Transverse colon (tissue), 4 donors: ENCODE measurements at regions of chr1 and their contacts with region 1.

Region 1: DNA sequence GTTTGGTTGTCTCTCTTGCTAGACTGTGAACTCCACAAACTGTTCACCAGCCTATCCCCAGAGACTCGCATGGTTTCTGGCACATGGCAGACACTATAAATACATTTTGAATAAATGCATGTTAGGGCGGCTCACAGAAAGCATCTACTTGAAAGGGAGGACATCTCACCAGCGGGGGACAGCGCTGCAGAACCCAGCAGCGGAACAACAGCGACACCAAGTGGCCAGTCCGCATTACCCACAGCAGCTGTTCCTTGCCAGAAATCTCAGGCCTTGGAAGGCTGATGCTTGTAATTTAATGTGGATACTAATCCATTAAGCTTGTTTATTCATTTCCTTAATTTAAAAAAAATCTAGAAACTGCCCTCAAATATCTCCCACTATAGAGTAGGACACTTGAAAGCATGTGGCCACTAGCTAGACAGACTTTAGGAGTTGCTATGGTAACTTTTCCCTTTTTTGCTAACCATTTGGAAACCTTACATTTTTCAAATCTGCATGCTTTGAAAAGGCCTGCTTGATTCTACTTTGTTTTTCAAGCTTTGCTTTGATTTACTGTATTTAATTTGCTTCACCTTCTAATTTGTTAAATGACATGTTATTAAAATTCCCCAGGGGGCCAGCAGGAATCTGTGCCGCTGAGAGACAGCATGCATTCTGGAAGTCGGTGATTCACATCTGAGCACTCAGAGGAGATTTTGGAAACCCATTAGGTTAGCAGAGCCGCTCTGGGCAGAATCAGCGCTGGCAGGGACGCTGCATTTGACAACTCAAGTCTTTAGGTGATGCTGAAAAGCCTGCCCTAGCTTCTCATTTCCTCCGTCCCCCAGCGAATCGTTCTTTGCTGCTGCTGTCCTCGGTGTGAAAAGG is 63.5 kb upstream of the SSX2IP start:
- DNase-seq: peak; percentile 76
- H3K4me3 ChIP-seq: no peak overlapping the region
- H3K27ac ChIP-seq: no peak overlapping the region
- H3K4me1 ChIP-seq: no peaks in the 10 kb centered on the region
- H3K27me3 ChIP-seq: no peaks in the 10 kb centered on the region
- CTCF ChIP-seq: peak; percentile 91 to 96 (median 95)
- EP300 ChIP-seq: no peak
- POLR2A ChIP-seq: no peak

Region 2: GRCh38 chr1:83905315-83905907 is 848.3 kb before region 1 on chr1:
- in situ Hi-C with region 1: loop called in 3 of 4 experiments (anchors 25 kb)
- intact Hi-C with region 1: no loop called
- DNase-seq: no peak
- H3K4me3 ChIP-seq: no peak overlapping the region
- H3K27ac ChIP-seq: no peak overlapping the region
- H3K4me1 ChIP-seq: peaks cover 0 to 15% (median 0%) of the 10 kb centered on the region in 4 donors
- H3K27me3 ChIP-seq: no peaks in the 10 kb centered on the region
- CTCF ChIP-seq: peak; percentile 45 to 75 (median 64)
- EP300 ChIP-seq: no peak
- POLR2A ChIP-seq: no peak

Region 3: GRCh38 chr1:84143796-84144565 is 609.8 kb before region 1 on chr1 and contains the start of gene PRKACB:
- in situ Hi-C with region 1: loop called (anchors 25 kb)
- intact Hi-C with region 1: no loop called
- DNase-seq: no peak
- H3K4me3 ChIP-seq: peak within 1 kb of the TSS in 3 of 4 donors; percentile 20 to 45 (median 30)
- H3K27ac ChIP-seq: peak within 1 kb of the TSS; percentile 71 to 85 (median 80)
- H3K4me1 ChIP-seq: peaks cover 0 to 41% (median 4%) of the 10 kb centered on the region in 4 donors
- H3K27me3 ChIP-seq: no peaks in the 10 kb centered on the region
- CTCF ChIP-seq: no peak
- EP300 ChIP-seq: no peak
- POLR2A ChIP-seq: peak; percentile 76
- total RNA-seq, gene PRKACB: 34.6 to 115 (median 79.2) TPM

Region 4: GRCh38 chr1:84450910-84451309 is 302.8 kb before region 1 on chr1:
- in situ Hi-C with region 1: loop called in 2 of 4 experiments (anchors 25 kb)
- intact Hi-C with region 1: no loop called
- DNase-seq: no peak
- H3K4me3 ChIP-seq: no peak overlapping the region
- H3K27ac ChIP-seq: no peak overlapping the region
- H3K4me1 ChIP-seq: no peaks in the 10 kb centered on the region
- H3K27me3 ChIP-seq: no peaks in the 10 kb centered on the region
- CTCF ChIP-seq: no peak
- EP300 ChIP-seq: no peak
- POLR2A ChIP-seq: no peak

Region 5: DNA sequence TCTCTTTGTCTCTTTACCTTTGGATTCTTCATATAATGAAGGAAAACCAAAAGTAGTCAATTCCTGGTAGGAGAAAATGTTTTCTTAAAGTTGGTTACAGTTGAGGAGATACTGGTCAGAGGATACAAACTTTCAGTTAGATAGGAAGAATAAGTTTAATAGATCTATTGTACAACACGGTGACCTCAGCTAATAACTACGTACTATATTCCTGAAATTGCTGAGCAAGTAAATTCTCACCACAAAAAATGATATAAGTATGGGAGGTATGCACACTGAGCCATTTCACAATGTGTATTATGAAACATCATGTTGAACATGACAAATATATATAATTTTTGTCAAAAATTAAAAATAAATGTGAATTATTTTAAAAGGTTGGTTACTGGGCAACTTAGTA is 83.9 kb before region 1 on chr1:
- in situ Hi-C with region 1: no loop called
- intact Hi-C with region 1: loop called (anchors 10 kb)
- DNase-seq: no peak
- H3K4me3 ChIP-seq: no peak overlapping the region
- H3K27ac ChIP-seq: no peak overlapping the region
- H3K4me1 ChIP-seq: peaks cover 0 to 1% (median 0%) of the 10 kb centered on the region in 4 donors
- H3K27me3 ChIP-seq: no peaks in the 10 kb centered on the region
- CTCF ChIP-seq: no peak
- EP300 ChIP-seq: no peak
- POLR2A ChIP-seq: no peak

Region 6: DNA sequence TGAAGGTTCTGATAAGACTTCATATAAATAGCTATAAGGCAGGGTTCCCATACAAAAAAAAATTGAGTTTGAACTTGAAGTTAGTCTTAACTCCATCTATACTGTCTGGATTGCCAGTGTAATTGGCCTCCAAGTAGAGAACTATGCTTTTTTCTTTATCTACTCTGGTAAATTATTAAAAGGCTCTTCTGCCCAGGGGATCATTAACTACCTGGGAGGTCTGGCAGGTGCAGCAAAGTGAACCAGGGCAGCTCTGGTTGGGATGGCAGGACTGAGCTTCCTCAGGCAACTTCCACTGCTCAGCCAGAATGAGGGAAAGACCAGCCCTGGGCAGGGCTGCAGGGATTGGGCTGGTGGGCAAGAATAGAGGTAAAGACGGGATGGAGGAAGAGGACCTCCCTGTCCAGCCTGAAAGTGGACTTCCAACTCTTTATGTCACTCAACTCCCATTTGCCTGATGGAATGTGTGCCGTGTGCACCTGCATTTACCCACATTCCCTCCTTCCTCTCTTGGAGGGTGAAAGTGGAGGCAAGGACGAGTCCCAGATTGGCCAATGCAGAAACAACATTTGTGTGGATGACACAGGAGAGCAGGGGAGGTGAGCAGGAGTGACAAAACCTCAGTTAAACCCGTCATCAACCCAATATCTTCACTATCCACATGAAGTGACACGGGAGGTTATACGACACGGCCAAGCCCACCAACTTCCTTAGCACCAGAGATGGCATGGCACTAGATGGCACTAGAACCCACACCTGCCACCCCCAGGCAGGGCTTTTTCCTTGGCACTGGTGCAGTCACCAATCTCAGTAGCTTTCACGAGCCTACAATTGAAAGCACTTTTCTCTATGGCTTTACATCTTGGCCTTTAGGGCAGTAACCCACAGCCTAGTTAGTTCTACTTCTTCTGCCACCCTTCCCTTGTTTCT is 852.0 kb after region 1 on chr1:
- in situ Hi-C with region 1: no loop called
- intact Hi-C with region 1: no loop called
- DNase-seq: no peak
- H3K4me3 ChIP-seq: no peak overlapping the region
- H3K27ac ChIP-seq: no peak overlapping the region
- H3K4me1 ChIP-seq: peaks cover 0 to 7% (median 0%) of the 10 kb centered on the region in 4 donors
- H3K27me3 ChIP-seq: no peaks in the 10 kb centered on the region
- CTCF ChIP-seq: peak in 1 of 5 experiments; percentile 7
- EP300 ChIP-seq: no peak
- POLR2A ChIP-seq: no peak